ENCODE measurements at regions of chr2 and their contacts with region 1.

Region 1: DNA sequence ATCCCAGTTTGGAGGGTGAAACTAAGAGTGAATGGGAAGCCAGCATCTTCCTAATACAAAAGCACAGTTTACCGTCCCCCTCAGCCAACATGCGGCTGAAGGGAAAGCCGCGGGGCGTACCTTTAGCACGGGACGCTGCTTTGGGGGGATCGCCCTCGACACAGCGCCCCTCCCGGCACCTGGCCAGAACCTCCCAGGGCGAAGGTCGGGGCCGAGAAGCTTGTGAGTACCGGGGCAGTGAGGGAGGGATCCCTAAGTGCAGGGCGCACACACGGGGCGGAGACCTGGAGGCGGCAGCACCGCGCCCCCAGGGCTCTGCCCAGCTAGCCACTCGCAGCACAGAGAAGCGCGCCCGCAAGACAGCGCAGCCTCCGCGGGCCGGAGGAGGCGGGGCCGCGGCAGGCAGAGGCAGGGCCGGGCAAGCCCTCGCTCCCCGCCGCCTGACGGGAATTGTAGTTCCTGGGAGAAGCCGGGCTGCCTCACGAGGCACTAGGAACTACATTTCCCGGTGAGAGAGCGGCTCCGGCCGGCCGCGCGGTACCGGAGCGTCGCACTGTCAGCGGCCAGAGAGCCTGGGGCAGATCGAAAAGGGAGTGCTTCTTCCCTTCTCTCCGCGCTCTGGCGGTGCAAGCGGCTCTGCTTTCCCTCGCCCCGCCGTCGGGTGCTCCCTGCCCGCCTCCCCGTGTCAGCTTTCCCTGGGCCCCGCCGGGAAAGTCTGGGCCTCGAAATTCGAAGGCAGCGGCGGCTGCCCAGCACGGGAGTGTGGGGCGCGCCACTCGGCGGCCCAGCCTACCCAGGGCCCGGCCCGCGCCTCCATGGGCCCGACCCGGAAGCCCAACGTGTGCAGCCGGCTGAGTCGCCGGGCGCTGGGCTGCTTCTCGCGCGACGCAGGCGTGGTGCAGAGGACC is at the starts of genes DCAF17 and METTL8:
- DNase-seq: peak; percentile 85 to 97
- H3K4me3 ChIP-seq: peak within 1 kb of the TSS; percentile 82 to 97
- H3K27ac ChIP-seq: peak within 1 kb of the TSS; percentile 96 to 99
- H3K4me1 ChIP-seq: peaks cover 0 to 14% of the 10 kb centered on the region in 2 donors
- H3K27me3 ChIP-seq: no peaks in the 10 kb centered on the region
- CTCF ChIP-seq: peak; percentile 16 to 42 (median 26)
- total RNA-seq, gene DCAF17: 22.6 TPM
- total RNA-seq, gene METTL8: 6.7 TPM

Region 2: GRCh38 chr2:169584005-169584877 is 1849.8 kb before region 1 on chr2 and contains the start of gene PPIG:
- intact Hi-C with region 1: loop called (anchors 10 kb)
- DNase-seq: peak; percentile 62 to 95
- H3K4me3 ChIP-seq: peak within 1 kb of the TSS; percentile 77 to 86
- H3K27ac ChIP-seq: peak within 1 kb of the TSS; percentile 96 to 98
- H3K4me1 ChIP-seq: peaks cover 6 to 22% of the 10 kb centered on the region in 2 donors
- H3K27me3 ChIP-seq: no peaks in the 10 kb centered on the region
- CTCF ChIP-seq: no peak
- total RNA-seq, gene PPIG: 30.2 TPM

Region 3: GRCh38 chr2:171160119-171160955 is 273.7 kb before region 1 on chr2 and contains the start of gene TLK1:
- intact Hi-C with region 1: loop called (anchors 5 kb)
- DNase-seq: peak; percentile 17 to 85
- H3K4me3 ChIP-seq: peak within 1 kb of the TSS; percentile 96 to 97
- H3K27ac ChIP-seq: peak within 1 kb of the TSS; percentile 98 to 99
- H3K4me1 ChIP-seq: peaks cover 0 to 7% of the 10 kb centered on the region in 2 donors
- H3K27me3 ChIP-seq: no peaks in the 10 kb centered on the region
- CTCF ChIP-seq: no peak
- total RNA-seq, gene TLK1: 32.2 TPM

Region 4: GRCh38 chr2:171522052-171522787 is 88.2 kb after region 1 on chr2 and contains the start of gene CYBRD1:
- intact Hi-C with region 1: loop called (anchors 1 kb)
- DNase-seq: peak; percentile 47 to 93
- H3K4me3 ChIP-seq: peak within 1 kb of the TSS; percentile 72 to 90
- H3K27ac ChIP-seq: peak within 1 kb of the TSS; percentile 94 to 97
- H3K4me1 ChIP-seq: peaks cover 0 to 23% of the 10 kb centered on the region in 2 donors
- H3K27me3 ChIP-seq: no peaks in the 10 kb centered on the region
- CTCF ChIP-seq: no peak
- total RNA-seq, gene CYBRD1: 222 TPM

Region 5: GRCh38 chr2:172095146-172095904 is 661.3 kb after region 1 on chr2:
- intact Hi-C with region 1: loop called (anchors 10 kb)
- DNase-seq: no peak
- H3K4me3 ChIP-seq: peak overlapping the region; percentile 48 to 67
- H3K27ac ChIP-seq: no peak overlapping the region
- H3K4me1 ChIP-seq: peaks cover 30 to 48% of the 10 kb centered on the region in 2 donors
- H3K27me3 ChIP-seq: peaks cover 66% of the 10 kb centered on the region
- CTCF ChIP-seq: no peak